GM12878 (cell line): ENCODE measurements at regions of chrX and their contacts with region 1.

Region 1: GRCh38 chrX:37763400-37763799 is 16.5 kb upstream of the CYBB start:
- DNase-seq: no peak
- ATAC-seq: peak; percentile 69
- H3K4me3 ChIP-seq: no peak overlapping the region
- H3K27ac ChIP-seq: peak overlapping the region; percentile 33; the same call in 1 of the 2 replicates
- H3K4me1 ChIP-seq: peaks cover 5% of the 10 kb centered on the region; the same call in 1 of the 2 replicates
- H3K27me3 ChIP-seq: no peaks in the 10 kb centered on the region
- CTCF ChIP-seq: no peak
- EP300 ChIP-seq: no peak
- POLR2A ChIP-seq: no peak
- RAD21 ChIP-seq: no peak

Region 2: GRCh38 chrX:37781814-37782213 is 18.4 kb after region 1 on chrX:
- CTCF ChIA-PET with region 1: interaction called, 16 read pairs
- POLR2A ChIA-PET with region 1: interaction called, 7 read pairs
- RAD21 ChIA-PET with region 1: interaction called, 26 read pairs
- SMC1A ChIA-PET with region 1: interaction called, 40 read pairs
- in situ Hi-C with region 1: no loop called
- intact Hi-C with region 1: no loop called
- DNase-seq: no peak
- ATAC-seq: peak; percentile 8
- H3K4me3 ChIP-seq: peak overlapping the region; percentile 50
- H3K27ac ChIP-seq: peak overlapping the region; percentile 62
- H3K4me1 ChIP-seq: peaks cover 8% of the 10 kb centered on the region
- H3K27me3 ChIP-seq: no peaks in the 10 kb centered on the region
- CTCF ChIP-seq: no peak
- EP300 ChIP-seq: no peak
- POLR2A ChIP-seq: no peak
- RAD21 ChIP-seq: no peak

Region 3: DNA sequence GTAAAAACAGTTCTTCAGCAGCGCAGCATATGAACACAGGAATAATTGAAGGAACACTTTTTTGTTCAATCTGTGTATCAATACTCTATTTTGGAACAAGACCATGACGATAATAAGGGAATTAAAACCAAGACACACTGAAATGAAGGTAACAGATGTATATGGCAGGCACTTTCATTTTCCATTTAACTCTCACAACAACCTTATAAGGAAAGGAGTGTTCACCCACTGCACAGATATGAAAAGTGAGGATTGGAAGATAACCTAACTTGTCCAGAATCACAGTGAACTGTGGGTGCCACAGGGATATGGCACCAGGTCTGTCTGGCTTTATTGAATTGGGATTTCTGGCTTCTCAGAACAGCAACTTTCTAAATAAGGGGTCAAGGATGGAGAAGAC is 1191.1 kb after region 1 on chrX:
- CTCF ChIA-PET with region 1: no interaction called
- POLR2A ChIA-PET with region 1: no interaction called
- RAD21 ChIA-PET with region 1: no interaction called
- SMC1A ChIA-PET with region 1: no interaction called
- in situ Hi-C with region 1: no loop called
- intact Hi-C with region 1: no loop called
- DNase-seq: no peak
- ATAC-seq: peak; percentile 81
- H3K4me3 ChIP-seq: no peak overlapping the region
- H3K27ac ChIP-seq: no peak overlapping the region
- H3K4me1 ChIP-seq: no peaks in the 10 kb centered on the region
- H3K27me3 ChIP-seq: no peaks in the 10 kb centered on the region
- CTCF ChIP-seq: no peak
- EP300 ChIP-seq: no peak
- POLR2A ChIP-seq: no peak
- RAD21 ChIP-seq: no peak